A673 (cell line): ENCODE measurements at regions of chr4 and their contacts with region 1.

Region 1: DNA sequence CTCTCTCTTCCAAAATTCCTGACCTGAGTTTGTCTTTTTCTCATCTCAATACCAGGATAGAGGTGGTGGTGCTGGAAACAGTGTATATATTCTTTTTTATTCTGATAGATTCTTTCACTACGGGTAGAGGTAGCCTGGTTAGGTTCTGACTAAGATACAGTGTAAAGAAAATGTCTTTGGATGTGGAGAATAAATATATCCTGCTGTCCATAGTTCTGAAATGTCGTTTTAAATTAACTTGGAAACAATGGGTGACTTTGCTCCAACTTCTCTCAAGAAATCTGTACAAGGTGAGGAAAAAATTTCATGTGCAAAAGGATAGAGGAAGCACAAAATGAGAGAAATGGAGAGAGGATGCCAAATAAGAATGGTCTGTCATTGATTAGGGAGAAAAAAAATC is 546.1 kb downstream of the GBA3 start:
- DNase-seq: no peak
- H3K4me3 ChIP-seq: no peak overlapping the region
- H3K27ac ChIP-seq: no peak overlapping the region
- H3K4me1 ChIP-seq: no peaks in the 10 kb centered on the region
- H3K27me3 ChIP-seq: no peaks in the 10 kb centered on the region
- CTCF ChIP-seq: no peak

Region 2: GRCh38 chr4:23195164-23195563 is 43.7 kb before region 1 on chr4:
- CTCF ChIA-PET with region 1: no interaction called
- POLR2A ChIA-PET with region 1: no interaction called
- intact Hi-C with region 1: loop called (anchors 1 kb)
- DNase-seq: no peak
- H3K4me3 ChIP-seq: no peak overlapping the region
- H3K27ac ChIP-seq: no peak overlapping the region
- H3K4me1 ChIP-seq: no peaks in the 10 kb centered on the region
- H3K27me3 ChIP-seq: no peaks in the 10 kb centered on the region
- CTCF ChIP-seq: no peak

Region 3: DNA sequence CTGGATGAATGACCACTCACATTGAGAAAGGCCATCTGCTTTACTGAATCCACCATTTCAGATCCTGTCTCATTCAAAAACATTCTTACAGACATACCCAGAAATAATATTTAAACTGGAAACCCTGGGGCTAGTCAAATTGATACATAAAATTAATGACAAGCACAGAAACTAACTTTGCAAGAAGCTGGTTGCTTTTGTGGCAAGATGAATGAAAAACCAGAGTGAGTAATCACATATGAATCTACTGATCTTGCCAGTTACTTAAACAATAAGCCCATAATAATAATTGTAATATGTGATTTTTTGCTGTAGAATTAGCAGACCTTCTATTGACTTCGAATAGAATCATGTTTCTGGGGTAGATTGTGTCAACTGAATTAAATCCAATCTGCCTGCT is 415.9 kb after region 1 on chr4:
- CTCF ChIA-PET with region 1: no interaction called
- POLR2A ChIA-PET with region 1: no interaction called
- intact Hi-C with region 1: no loop called
- DNase-seq: no peak
- H3K4me3 ChIP-seq: no peak overlapping the region
- H3K27ac ChIP-seq: no peak overlapping the region
- H3K4me1 ChIP-seq: no peaks in the 10 kb centered on the region
- H3K27me3 ChIP-seq: no peaks in the 10 kb centered on the region
- CTCF ChIP-seq: no peak